ENCODE measurements at regions of chr16 and their contacts with region 1.

Region 1: GRCh38 chr16:29983420-29984136 is 9.9 kb downstream of the TAOK2 start:
- DNase-seq: no peak

Region 2: GRCh38 chr16:29995911-29996772 is 12.6 kb after region 1 on chr16 and contains the start of gene INO80E:
- CTCF ChIA-PET with region 1: no interaction called
- POLR2A ChIA-PET with region 1: interaction called, 74 read pairs
- DNase-seq: peak; percentile 100

Measured in HEK293T (cell line).